PC-3 (cell line): ENCODE measurements at regions of chr9 and their contacts with region 1.

Region 1: DNA sequence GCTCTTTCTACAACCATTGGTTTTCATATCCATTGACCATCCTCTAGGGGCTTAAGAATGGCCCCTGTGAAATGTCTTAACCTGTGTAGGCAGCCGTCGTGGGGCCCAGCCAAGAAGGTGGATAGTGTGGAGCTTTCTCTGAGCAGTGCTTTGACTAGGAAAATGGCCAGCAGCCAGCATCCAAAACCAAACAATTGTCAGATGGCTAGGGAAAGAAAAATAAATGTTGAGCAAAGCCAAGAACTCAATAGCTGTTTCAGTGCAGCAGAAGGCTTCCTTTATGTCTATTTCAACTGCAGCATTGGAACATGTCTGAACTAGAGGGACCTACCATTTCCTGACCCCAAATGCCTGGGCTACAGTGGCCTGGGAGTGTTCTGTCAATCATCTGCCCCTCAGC is 374.9 kb downstream of the TLE4 start:
- DNase-seq: no peak
- ATAC-seq: no peak
- H3K4me3 ChIP-seq: no peak overlapping the region
- H3K27ac ChIP-seq: no peak overlapping the region
- H3K4me1 ChIP-seq: peaks cover 9% of the 10 kb centered on the region; the same call in 1 of the 2 replicates
- H3K27me3 ChIP-seq: no peaks in the 10 kb centered on the region
- CTCF ChIP-seq: no peak

Region 2: GRCh38 chr9:79477955-79478771 is 468.5 kb before region 1 on chr9:
- CTCF ChIA-PET with region 1: no interaction called
- POLR2A ChIA-PET with region 1: no interaction called
- intact Hi-C with region 1: loop called (anchors 10 kb)
- DNase-seq: peak; percentile 24
- ATAC-seq: no peak
- H3K4me3 ChIP-seq: no peak overlapping the region
- H3K27ac ChIP-seq: no peak overlapping the region
- H3K4me1 ChIP-seq: 0 out of 2 replicates have a peak, but pooled peaks cover 11% of the 10 kb centered on the region
- H3K27me3 ChIP-seq: no peaks in the 10 kb centered on the region
- CTCF ChIP-seq: peak; percentile 52